ENCODE measurements at regions of chr16 and their contacts with region 1.

Region 1: DNA sequence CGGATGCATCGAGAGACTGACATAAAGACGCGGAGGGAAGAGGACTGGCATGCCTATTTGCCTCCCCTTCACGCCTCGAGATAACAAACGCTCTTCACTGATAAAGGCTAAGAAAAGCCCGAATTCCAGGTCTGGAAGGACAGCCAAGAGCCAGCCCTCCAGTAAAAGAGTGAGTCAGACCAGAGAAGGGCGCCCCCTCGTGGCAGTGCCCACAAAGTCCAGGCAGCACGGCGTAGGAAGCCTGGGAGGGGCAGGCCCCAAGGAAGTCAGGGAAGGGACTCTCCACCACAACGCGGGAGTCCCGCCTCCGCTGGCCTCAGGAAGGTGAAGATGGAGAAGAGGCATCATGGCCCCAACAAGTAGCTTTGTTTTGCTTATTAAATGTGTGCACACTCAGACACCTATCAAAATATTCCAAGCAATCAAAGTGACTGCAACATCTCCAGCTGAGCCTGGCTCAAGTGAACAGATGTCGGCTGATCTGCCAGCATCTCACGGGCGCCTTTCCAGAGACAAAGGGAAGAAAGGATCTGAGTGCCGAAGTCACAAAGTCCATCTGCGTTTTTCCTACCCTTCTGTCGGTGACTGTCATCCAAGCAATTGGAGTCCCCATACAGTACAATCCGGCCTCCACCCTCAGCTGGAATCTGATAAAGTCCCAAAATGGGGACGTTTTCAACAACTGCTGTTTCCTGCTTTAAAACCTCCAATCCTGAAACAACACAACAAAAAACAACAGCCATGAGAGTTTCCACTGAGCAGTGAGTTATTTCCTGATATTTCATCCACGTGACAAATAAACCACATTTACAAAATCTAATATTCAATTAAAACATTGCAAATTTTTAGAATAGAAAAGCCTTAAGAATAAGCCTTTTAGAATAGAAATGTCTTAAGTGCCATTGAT is 20.4 kb upstream of the SLC38A8 start:
- DNase-seq: peak; percentile 95

Region 2: GRCh38 chr16:83744441-83744981 is 318.5 kb before region 1 on chr16:
- intact Hi-C with region 1: no loop called
- DNase-seq: peak; percentile 87

Region 3: GRCh38 chr16:83826146-83826913 is 236.7 kb before region 1 on chr16:
- intact Hi-C with region 1: loop called in 1 of 2 experiments (anchors 5 kb)
- DNase-seq: peak; percentile 95

Region 4: DNA sequence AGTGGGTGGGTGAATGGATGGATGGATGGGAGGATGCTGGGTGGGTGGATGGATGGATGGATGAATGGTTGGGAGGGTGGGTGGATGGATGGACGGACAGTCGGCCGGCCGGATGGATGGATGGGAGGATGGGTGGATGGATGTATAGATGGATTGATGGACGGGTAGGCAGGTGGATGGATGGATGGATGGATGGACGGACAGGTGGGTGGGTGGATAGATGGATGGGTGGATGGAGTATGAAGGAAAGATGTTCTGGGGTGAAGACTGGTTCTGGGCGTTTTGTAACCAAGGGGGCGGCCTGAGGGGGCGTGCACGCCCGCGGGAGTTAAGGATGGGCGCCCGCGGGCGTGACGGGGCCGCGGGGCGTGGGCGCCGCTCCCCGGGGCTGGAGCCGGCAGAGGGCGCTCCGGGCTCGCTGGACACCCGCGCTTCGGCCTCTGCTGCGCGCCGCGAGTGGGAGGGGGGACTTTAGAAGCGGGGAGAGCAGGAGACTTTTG is 95.1 kb before region 1 on chr16 and contains the start of gene NECAB2:
- intact Hi-C with region 1: loop called (anchors 2 to 5 kb)
- DNase-seq: peak; percentile 86
- total RNA-seq, gene NECAB2: 0.71 to 3.0 TPM

Region 5: GRCh38 chr16:84000989-84001642 is 61.9 kb before region 1 on chr16:
- intact Hi-C with region 1: loop called in 1 of 2 experiments (anchors 2 kb)
- DNase-seq: no peak

Region 6: DNA sequence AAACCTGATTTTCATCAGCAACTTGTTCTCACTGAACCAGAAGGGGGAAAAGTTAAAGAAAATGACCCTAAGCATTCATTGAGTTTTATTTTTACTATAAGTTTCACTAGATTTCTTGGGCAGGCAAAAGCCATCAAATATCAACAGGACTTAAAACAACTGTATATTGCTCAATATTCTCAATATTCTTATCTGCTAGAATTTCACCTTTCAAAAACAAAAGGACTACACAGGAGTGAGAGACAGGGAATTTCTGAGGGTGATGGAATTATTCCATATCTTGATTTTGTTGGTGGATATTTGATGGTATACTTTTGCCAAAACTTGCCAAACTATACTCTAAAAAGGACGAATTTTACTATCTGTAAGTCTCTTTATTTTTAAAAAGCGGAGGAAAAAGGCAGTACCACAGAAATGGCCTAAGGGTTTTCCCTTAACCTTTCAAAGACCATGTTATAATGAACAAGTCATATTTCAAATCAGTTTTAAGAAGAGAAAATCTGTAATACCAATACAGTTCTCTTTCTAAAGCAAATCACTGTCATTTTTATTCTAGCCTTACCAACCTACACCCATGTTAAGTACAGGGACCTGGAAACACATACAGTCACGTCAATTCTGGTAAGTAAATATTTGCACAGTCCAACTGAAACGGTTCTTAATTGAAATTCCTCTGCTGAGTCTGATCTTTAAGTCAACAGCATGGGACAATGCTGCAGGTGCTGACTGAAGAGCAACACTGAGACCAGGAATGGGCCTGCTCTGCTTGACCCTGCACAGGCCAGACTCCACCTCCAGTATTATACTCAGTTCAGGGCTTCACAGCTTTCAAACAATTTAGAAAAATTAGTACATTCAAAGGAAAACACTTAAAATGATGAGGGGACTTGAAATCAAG is 33.4 kb after region 1 on chr16:
- intact Hi-C with region 1: no loop called
- DNase-seq: no peak

Region 7: DNA sequence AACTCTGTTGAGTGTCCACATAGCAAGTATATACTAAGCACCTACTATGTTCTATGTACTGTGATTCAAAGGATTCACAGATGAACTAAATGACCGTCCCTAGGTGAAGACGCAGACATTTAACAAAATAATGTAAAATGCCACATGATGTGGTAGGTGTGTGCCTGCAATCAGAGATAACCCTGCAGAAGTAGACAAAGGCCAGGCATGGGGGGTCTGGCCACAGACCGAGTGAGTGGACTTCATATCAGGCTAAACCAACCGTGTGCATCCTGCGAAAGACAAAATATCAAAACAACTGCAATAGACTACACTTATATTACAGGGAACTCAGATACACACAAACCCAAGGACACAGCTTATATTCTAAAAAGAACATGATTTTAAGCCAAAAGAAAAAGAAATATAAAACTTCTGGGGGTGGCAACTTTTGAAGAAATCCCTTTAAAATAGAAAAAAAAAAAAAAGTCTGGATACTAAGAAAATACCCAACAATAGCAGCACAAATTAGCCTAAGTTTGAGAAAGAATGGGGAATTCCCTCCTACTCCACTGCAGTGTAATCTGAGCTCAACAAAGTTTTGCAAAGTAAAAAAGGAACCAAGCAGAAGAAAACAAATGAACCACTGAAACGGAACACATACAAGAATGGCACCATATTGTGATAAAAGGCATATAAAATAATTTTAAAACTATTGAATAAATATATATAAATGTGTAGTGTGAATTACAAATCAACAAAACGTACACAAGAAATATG is 69.7 kb after region 1 on chr16:
- intact Hi-C with region 1: no loop called
- DNase-seq: no peak

Measured in posterior vena cava (tissue), 2 donors.